MCF 10A (cell line): ENCODE measurements at regions of chr1 and their contacts with region 1.

Region 1: DNA sequence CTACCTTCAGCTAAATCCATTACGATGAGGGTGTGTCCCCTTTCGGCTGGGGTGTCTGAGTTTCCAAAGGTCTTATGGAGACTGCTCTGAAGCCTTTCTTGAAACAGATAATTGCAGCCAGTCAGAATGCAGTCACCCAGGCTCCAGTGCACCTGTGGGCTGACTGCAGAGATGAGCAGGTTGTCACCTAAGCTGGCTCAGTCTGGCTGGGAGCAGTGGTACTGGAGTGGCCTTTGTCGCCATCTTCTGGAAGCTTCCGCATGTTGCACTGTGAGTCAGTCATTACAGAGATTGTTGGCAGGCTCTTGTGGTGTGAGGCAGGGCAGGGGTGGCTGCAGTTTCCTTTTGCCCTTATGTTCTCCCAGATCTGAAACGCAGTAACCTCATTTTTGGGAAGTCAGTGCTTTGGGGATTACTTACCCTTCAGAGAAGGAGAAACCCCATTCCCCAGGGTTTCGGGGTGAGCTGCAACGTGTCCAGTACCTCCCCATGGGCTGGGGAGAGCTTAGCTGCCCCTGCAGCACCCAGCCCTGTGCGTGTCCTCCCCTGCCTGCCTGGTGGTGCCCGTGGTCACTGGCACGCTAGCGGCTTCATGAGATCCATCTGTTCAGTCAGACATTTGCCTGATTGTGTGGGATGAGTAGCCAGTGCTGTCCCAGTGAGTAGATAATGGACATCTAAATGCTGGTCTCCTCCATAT is 48.0 kb downstream of the SMYD2 start:
- DNase-seq: peak; percentile 95
- H3K4me3 Mint-ChIP-seq: no peak overlapping the region
- H3K27ac Mint-ChIP-seq: no peak overlapping the region
- H3K4me1 Mint-ChIP-seq: no peaks in the 10 kb centered on the region
- H3K27me3 Mint-ChIP-seq: no peaks in the 10 kb centered on the region
- CTCF ChIP-seq: peak; percentile 100

Region 2: GRCh38 chr1:213980906-213981305 is 348.0 kb before region 1 on chr1:
- CTCF ChIA-PET with region 1: no interaction called
- POLR2A ChIA-PET with region 1: no interaction called
- intact Hi-C with region 1: no loop called
- DNase-seq: no peak
- H3K4me3 Mint-ChIP-seq: no peak overlapping the region
- H3K27ac Mint-ChIP-seq: no peak overlapping the region
- H3K4me1 Mint-ChIP-seq: no peaks in the 10 kb centered on the region
- H3K27me3 Mint-ChIP-seq: peaks cover 87% of the 10 kb centered on the region
- CTCF ChIP-seq: no peak

Region 3: DNA sequence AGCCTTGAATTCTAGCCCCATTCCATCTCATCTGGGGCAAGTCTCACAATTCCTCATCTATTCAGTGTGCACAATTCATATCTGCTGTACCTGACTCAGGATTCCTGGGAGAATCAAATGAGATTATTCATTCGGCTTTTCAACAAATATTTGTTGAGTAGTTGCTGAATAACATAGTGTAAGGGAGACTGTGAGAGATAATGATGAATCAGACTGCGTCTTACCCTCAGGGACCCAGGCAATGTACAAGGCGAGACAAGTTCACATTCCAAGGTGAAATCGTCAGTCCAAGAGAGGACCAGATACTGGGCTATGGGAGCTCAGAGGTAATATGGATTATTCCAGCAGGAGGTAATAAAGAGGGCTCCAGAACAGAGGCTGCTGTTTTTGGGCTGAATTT is 115.8 kb before region 1 on chr1:
- CTCF ChIA-PET with region 1: interaction called, 804 read pairs
- POLR2A ChIA-PET with region 1: interaction called, 75 read pairs
- intact Hi-C with region 1: loop called (anchors 1 kb)
- DNase-seq: peak; percentile 82
- H3K4me3 Mint-ChIP-seq: peak overlapping the region; percentile 15
- H3K27ac Mint-ChIP-seq: peak overlapping the region; percentile 7
- H3K4me1 Mint-ChIP-seq: peaks cover 20% of the 10 kb centered on the region
- H3K27me3 Mint-ChIP-seq: no peaks in the 10 kb centered on the region
- CTCF ChIP-seq: peak; percentile 25

Region 4: GRCh38 chr1:214310010-214310409 is 18.9 kb before region 1 on chr1:
- CTCF ChIA-PET with region 1: interaction called, 332 read pairs
- POLR2A ChIA-PET with region 1: interaction called, 3 read pairs
- intact Hi-C with region 1: no loop called
- DNase-seq: peak; percentile 34
- H3K4me3 Mint-ChIP-seq: no peak overlapping the region
- H3K27ac Mint-ChIP-seq: no peak overlapping the region
- H3K4me1 Mint-ChIP-seq: no peaks in the 10 kb centered on the region
- H3K27me3 Mint-ChIP-seq: no peaks in the 10 kb centered on the region
- CTCF ChIP-seq: no peak

Region 5: GRCh38 chr1:214404154-214404553 is 75.2 kb after region 1 on chr1:
- CTCF ChIA-PET with region 1: interaction called, 13 read pairs
- POLR2A ChIA-PET with region 1: no interaction called
- intact Hi-C with region 1: no loop called
- DNase-seq: peak; percentile 40
- H3K4me3 Mint-ChIP-seq: no peak overlapping the region
- H3K27ac Mint-ChIP-seq: peak overlapping the region; percentile 20
- H3K4me1 Mint-ChIP-seq: peaks cover 24% of the 10 kb centered on the region
- H3K27me3 Mint-ChIP-seq: no peaks in the 10 kb centered on the region
- CTCF ChIP-seq: no peak

Region 6: DNA sequence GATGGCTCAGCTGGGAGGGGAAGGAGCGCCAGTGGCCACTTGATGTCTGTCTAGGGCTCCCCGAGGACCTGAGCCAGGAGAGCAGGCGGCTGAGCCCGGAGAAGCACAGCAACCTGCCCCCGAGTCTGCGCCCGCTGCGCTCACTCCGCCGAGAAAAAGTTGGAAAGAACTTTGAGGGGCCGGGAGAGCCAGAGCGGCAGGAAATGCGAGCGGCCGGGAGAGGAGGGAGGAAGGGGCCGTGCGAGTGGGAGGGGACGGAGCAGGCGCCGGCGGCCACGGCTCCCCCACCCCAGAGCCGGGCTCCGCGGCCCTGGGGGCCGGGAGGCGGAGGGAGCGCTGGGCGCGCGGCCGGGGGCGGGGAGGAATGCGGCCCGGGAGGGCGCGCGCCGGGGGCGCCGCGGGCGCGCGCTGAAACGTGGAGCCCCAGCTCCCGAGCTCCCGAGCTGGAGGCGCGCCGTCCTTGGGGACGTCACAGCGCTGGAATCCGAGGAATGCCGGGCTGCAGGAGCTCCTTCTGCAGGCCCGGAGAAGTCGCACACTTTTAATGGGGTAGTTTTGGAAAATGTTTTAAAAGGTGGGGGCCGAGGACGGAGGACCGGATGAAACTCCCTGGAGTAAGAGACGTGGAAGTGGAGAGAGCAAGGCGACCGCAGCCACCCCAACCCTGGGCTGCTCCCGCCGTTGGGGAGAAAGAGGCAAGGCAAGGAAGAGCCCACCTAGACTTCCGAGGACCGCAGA is 222.7 kb after region 1 on chr1 and contains the start of gene PTPN14:
- CTCF ChIA-PET with region 1: interaction called, 63 read pairs
- POLR2A ChIA-PET with region 1: interaction called, 7 read pairs
- intact Hi-C with region 1: loop called (anchors 1 kb)
- DNase-seq: peak; percentile 97
- H3K4me3 Mint-ChIP-seq: peak within 1 kb of the TSS; percentile 89
- H3K27ac Mint-ChIP-seq: peak within 1 kb of the TSS; percentile 90
- H3K4me1 Mint-ChIP-seq: peaks cover 39% of the 10 kb centered on the region
- H3K27me3 Mint-ChIP-seq: no peaks in the 10 kb centered on the region
- CTCF ChIP-seq: peak; percentile 77
- total RNA-seq, gene PTPN14: 240 and 243 TPM in 2 replicates

Region 7: DNA sequence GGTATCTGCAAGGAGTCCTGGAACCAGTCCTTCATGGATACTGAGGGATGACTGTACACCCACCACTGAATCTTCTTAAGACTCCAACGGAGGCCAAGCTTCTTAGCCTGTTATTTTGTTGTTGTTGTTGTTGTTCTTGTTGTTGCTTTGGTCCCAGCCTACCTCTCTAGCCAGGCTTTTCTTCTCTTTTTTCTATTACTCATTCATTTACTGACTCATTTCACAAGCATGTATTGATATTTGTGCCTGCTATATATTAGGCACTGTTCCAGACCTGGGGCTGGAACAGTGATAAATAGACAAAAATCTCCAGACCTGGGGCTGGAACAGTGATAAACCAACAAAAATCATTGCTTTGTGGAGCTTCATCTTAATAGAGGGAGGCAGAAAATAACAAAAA is 294.5 kb after region 1 on chr1:
- CTCF ChIA-PET with region 1: interaction called, 358 read pairs
- POLR2A ChIA-PET with region 1: interaction called, 7 read pairs
- intact Hi-C with region 1: loop called (anchors 1 kb)
- DNase-seq: peak; percentile 42
- H3K4me3 Mint-ChIP-seq: no peak overlapping the region
- H3K27ac Mint-ChIP-seq: peak overlapping the region; percentile 36
- H3K4me1 Mint-ChIP-seq: peaks cover 11% of the 10 kb centered on the region
- H3K27me3 Mint-ChIP-seq: no peaks in the 10 kb centered on the region
- CTCF ChIP-seq: no peak